Mammary epithelial cell (primary cell): ENCODE measurements at regions of chr14 and their contacts with region 1.

Region 1: DNA sequence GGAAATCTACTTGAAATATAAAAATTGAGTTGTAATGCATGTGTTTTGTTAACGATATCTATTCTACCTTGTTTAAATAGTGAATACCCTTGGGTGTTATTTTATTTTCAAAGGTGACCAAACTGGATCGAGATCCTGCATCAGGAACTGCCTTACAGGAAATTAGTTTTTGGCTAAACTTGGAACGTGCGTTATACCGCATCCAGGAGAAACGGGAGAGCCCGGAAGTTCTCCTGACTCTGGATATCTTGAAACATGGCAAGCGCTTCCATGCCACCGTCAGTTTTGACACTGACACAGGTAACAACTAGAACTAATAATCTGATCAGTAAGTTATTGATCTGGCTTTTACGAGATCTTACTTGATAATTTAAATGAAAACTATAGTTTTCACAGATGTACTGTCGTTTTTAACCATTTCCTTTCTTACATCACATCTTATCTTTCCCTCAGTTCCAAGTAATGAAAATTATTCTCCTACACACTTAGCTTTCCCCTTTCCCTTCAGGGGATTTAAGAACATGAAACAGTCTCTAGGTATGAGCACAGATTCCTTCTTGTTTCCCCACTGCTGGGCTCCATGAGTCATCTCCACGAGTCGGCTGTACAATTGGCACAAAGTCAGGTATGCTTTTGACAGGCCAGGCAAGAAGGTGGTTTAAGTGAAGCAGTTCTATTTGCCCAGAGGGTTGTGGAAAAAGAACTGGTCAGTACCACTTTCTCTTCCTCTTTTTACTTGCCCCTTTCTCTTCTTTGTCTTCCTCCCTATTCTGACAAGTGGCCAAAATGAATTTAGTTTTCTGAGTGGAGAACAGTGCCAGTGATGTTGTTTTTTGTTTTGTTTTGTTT is 16.1 kb downstream of the DYNC1H1 start:
- DNase-seq: peak; percentile 98
- H3K4me3 ChIP-seq: no peak overlapping the region
- H3K27ac ChIP-seq: peak overlapping the region; percentile 74
- H3K4me1 ChIP-seq: peaks cover 32% of the 10 kb centered on the region
- H3K27me3 ChIP-seq: no peaks in the 10 kb centered on the region
- CTCF ChIP-seq: no peak

Region 2: GRCh38 chr14:101879529-101880336 is 100.7 kb before region 1 on chr14:
- CTCF ChIA-PET with region 1: no interaction called
- dilution Hi-C with region 1: no loop called
- in situ Hi-C with region 1: no loop called
- intact Hi-C with region 1: no loop called
- DNase-seq: no peak
- H3K4me3 ChIP-seq: no peak overlapping the region
- H3K27ac ChIP-seq: no peak overlapping the region
- H3K4me1 ChIP-seq: no peaks in the 10 kb centered on the region
- H3K27me3 ChIP-seq: no peaks in the 10 kb centered on the region
- CTCF ChIP-seq: no peak

Region 3: DNA sequence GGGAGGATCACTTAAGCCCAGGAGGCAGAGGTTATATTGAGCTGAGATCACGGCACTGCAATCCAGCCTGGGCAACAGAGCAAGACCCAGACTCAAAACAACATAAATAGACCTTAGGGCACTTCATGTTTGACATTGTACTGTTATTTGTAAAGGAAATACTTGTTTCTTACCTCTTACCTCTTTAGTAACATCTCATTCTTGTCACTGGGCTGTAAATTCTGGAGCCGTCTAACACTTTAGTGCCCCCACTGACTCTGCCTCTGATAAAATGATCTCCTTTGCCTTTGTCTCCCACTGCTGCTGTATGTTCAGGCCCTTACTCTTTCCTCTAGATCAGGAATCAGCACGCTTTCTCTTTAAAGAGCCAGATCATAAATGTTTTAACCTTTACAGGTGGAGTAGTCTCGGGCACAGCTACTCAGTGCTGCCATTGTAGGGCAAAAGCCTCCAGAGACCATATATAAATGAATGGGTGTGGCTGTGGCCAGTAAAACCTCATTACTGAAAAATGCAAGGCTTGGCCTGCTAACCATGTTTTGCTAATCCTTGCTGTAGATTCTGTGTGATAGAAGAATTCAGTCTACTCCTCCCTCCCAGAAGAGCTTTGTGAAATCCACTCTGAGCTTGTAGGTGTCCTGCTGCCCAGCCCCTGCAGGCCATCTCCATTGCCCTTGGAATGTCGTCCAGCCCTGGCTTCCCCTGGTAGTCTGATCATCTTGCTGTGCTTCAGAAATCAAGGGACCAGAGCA is 48.1 kb after region 1 on chr14:
- CTCF ChIA-PET with region 1: no interaction called
- dilution Hi-C with region 1: loop called (anchors 10 kb)
- in situ Hi-C with region 1: no loop called
- intact Hi-C with region 1: loop called (anchors 2 kb)
- DNase-seq: peak; percentile 86
- H3K4me3 ChIP-seq: no peak overlapping the region
- H3K27ac ChIP-seq: peak overlapping the region; percentile 71
- H3K4me1 ChIP-seq: peaks cover 37% of the 10 kb centered on the region
- H3K27me3 ChIP-seq: no peaks in the 10 kb centered on the region
- CTCF ChIP-seq: no peak

Region 4: DNA sequence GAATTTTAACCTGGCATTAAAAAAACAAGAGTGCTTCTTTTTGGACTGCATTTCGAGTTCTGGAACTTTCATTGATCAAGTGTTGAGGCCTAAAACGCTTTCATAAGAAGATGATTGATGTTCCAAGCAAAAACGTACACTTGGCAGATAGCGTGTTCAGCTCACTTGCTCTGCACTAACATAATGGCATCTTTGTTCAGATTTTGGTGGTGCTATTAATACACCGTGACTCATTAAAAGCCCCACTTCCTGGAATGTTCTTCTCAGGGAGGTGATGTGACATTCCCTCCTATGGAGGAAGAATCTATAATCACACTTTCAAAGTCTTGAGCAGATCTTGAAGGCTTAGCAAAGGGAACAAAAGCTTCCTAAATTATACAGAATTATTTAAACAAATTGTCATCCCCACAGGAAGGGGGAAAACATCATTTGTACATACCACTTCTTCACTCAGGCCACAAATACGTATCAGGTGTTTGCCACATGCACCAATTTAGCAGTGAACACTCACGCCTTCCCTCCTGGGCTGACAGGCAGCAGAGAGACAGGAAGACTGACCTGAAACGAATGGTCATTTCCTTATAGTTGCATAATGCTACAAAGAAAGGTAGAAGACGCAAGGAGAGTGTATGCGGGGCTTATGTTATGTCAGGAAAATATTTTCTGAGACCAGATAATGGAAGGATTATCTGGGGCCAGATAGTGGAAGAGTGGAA is 91.0 kb after region 1 on chr14:
- CTCF ChIA-PET with region 1: no interaction called
- dilution Hi-C with region 1: loop called (anchors 5 kb)
- in situ Hi-C with region 1: no loop called
- intact Hi-C with region 1: no loop called
- DNase-seq: peak; percentile 83
- H3K4me3 ChIP-seq: no peak overlapping the region
- H3K27ac ChIP-seq: peak overlapping the region; percentile 73
- H3K4me1 ChIP-seq: peaks cover 16% of the 10 kb centered on the region
- H3K27me3 ChIP-seq: no peaks in the 10 kb centered on the region
- CTCF ChIP-seq: no peak